ENCODE measurements at regions of chr9 and their contacts with region 1.

Region 1: GRCh38 chr9:107489687-107490605 is at the start of gene KLF4:
- DNase-seq: peak; percentile 89
- ATAC-seq: peak; percentile 84
- H3K4me3 Mint-ChIP-seq: peak within 1 kb of the TSS; percentile 65
- H3K27ac Mint-ChIP-seq: no peak within 1 kb of the TSS
- H3K4me1 Mint-ChIP-seq: peaks cover 20% of the 10 kb centered on the region
- H3K27me3 Mint-ChIP-seq: peaks cover 58% of the 10 kb centered on the region
- total RNA-seq, gene KLF4: 0.88 to 1.2 TPM

Region 2: GRCh38 chr9:107243751-107244150 is 246.2 kb before region 1 on chr9:
- CTCF ChIA-PET with region 1: no interaction called
- POLR2A ChIA-PET with region 1: no interaction called
- intact Hi-C with region 1: loop called in 1 of 2 experiments (anchors 2 kb)
- DNase-seq: peak; percentile 74
- ATAC-seq: peak; percentile 92
- H3K4me3 Mint-ChIP-seq: no peak overlapping the region
- H3K27ac Mint-ChIP-seq: peak overlapping the region; percentile 84
- H3K4me1 Mint-ChIP-seq: peaks cover 32% of the 10 kb centered on the region
- H3K27me3 Mint-ChIP-seq: peaks cover 2% of the 10 kb centered on the region

Region 3: GRCh38 chr9:107548048-107548800 is 58.3 kb after region 1 on chr9:
- CTCF ChIA-PET with region 1: no interaction called
- POLR2A ChIA-PET with region 1: no interaction called
- intact Hi-C with region 1: loop called in 1 of 2 experiments (anchors 2 kb)
- DNase-seq: peak; percentile 31
- ATAC-seq: peak; percentile 72
- H3K4me3 Mint-ChIP-seq: no peak overlapping the region
- H3K27ac Mint-ChIP-seq: peak overlapping the region; percentile 79
- H3K4me1 Mint-ChIP-seq: peaks cover 9% of the 10 kb centered on the region
- H3K27me3 Mint-ChIP-seq: peaks cover 5% of the 10 kb centered on the region

Region 4: GRCh38 chr9:107637421-107638420 is 147.8 kb after region 1 on chr9:
- CTCF ChIA-PET with region 1: no interaction called
- POLR2A ChIA-PET with region 1: no interaction called
- intact Hi-C with region 1: loop called in 1 of 2 experiments (anchors 5 kb)
- DNase-seq: peak; percentile 11
- ATAC-seq: no peak
- H3K4me3 Mint-ChIP-seq: no peak overlapping the region
- H3K27ac Mint-ChIP-seq: no peak overlapping the region
- H3K4me1 Mint-ChIP-seq: peaks cover 8% of the 10 kb centered on the region
- H3K27me3 Mint-ChIP-seq: peaks cover 48% of the 10 kb centered on the region

Region 5: DNA sequence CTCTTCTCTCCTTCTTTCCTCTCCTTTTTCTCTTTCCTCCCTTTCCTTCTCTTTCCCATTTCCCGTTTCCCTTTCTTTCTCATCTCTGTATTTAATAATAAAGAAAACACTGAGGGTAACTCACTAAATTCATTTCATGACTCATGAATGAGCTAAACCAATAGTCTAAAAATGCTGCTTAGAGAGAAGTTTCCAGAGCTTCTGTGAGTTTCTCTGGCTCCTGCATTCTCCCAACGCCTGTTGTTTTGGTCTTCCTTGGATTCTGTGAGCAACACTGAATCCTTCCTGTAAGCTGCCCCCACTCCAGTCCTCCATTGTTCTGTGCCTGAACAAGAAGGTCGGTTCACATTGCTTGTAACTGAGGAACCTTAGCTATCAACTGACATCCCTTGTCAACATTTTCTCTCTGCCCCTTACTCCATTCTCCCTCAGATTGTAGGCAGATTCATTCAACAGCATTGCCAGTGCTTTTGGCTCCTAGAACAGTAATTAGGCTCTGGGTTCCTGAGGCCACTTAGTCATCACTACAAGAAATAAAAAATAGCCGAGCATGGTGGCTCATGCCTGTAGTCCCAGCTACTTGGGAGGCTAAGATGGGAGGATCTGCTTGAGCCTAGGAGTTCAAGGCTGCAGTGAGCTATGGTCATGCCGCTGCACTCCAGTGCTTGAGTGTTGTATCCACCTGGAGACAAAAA is 237.3 kb after region 1 on chr9:
- CTCF ChIA-PET with region 1: no interaction called
- POLR2A ChIA-PET with region 1: no interaction called
- intact Hi-C with region 1: no loop called
- DNase-seq: no peak
- ATAC-seq: no peak
- H3K4me3 Mint-ChIP-seq: no peak overlapping the region
- H3K27ac Mint-ChIP-seq: no peak overlapping the region
- H3K4me1 Mint-ChIP-seq: no peaks in the 10 kb centered on the region
- H3K27me3 Mint-ChIP-seq: peaks cover 3% of the 10 kb centered on the region

Region 6: DNA sequence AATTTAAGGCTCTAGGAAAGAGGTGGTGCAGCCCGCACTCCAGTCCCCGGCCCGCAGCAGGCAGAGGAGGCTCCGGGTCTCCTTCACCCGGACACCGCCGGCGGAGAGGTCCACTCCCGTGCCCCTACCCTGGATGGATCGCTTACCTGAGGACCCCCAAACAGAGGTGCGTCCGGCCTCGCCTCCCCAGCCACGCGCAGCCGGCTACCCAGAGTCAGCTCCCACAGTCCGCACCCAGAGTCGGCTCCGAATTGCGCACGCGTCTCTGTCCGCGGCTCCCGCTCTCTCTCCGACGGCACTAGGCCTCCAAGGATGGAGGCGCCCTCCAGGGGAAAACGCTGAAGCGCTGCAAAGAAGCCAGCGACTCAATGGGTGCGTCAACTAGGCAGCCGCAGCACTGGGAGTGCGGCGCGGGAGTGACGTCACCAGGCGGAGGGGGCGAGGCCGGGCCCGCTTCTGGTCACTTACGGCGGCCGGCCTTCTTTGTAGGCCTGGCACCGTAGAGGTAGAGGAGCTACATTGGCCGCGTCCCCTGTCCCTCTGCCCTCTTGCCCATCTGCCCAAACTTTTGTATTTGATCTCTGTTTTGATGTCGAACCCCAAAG is 1443.9 kb after region 1 on chr9 and contains the start of gene ELP1:
- CTCF ChIA-PET with region 1: no interaction called
- POLR2A ChIA-PET with region 1: no interaction called
- intact Hi-C with region 1: loop called in 1 of 2 experiments (anchors 1 kb)
- DNase-seq: peak; percentile 96
- ATAC-seq: peak; percentile 88
- H3K4me3 Mint-ChIP-seq: peak within 1 kb of the TSS; percentile 98
- H3K27ac Mint-ChIP-seq: peak within 1 kb of the TSS; percentile 95
- H3K4me1 Mint-ChIP-seq: peaks cover 29% of the 10 kb centered on the region
- H3K27me3 Mint-ChIP-seq: no peaks in the 10 kb centered on the region
- total RNA-seq, gene ELP1: 31.1 to 58.0 TPM

Measured in activated CD4-positive, alpha-beta T cell treated with anti-CD3 and anti-CD28 coated beads for 36 hours (primary cell).